ENCODE measurements at regions of chr19 and their contacts with region 1.

Region 1: GRCh38 chr19:16185123-16185767 is at the start of gene FAM32A:
- DNase-seq: peak; percentile 97 to 99
- ATAC-seq: peak; percentile 92 to 97 (median 94)
- H3K4me3 ChIP-seq: peak within 1 kb of the TSS; percentile 89
- H3K4me3 Mint-ChIP-seq: peak within 1 kb of the TSS; percentile 100
- H3K27ac ChIP-seq: peak within 1 kb of the TSS; percentile 77
- H3K27ac Mint-ChIP-seq: peak within 1 kb of the TSS; percentile 96 to 99
- H3K4me1 ChIP-seq: peaks cover 41% of the 10 kb centered on the region
- H3K4me1 Mint-ChIP-seq: peaks cover 25 to 33% of the 10 kb centered on the region in 2 donors
- H3K27me3 ChIP-seq: no peaks in the 10 kb centered on the region
- H3K27me3 Mint-ChIP-seq: no peaks in the 10 kb centered on the region
- CTCF ChIP-seq: no peak
- total RNA-seq, gene FAM32A: 46.3 to 69.3 (median 63.3) TPM

Region 2: GRCh38 chr19:15629003-15629880 is 556.0 kb before region 1 on chr19:
- intact Hi-C with region 1: loop called (anchors 1 kb)
- DNase-seq: peak; percentile 84 to 90
- ATAC-seq: peak; percentile 89 to 96 (median 95)
- H3K4me3 ChIP-seq: no peak overlapping the region
- H3K4me3 Mint-ChIP-seq: no peak overlapping the region
- H3K27ac ChIP-seq: no peak overlapping the region
- H3K27ac Mint-ChIP-seq: no peak overlapping the region
- H3K4me1 ChIP-seq: peaks cover 7% of the 10 kb centered on the region
- H3K4me1 Mint-ChIP-seq: peaks cover 6 to 8% of the 10 kb centered on the region in 2 donors
- H3K27me3 ChIP-seq: no peaks in the 10 kb centered on the region
- H3K27me3 Mint-ChIP-seq: peaks cover 6 to 8% of the 10 kb centered on the region in 2 donors
- CTCF ChIP-seq: peak; percentile 79

Region 3: DNA sequence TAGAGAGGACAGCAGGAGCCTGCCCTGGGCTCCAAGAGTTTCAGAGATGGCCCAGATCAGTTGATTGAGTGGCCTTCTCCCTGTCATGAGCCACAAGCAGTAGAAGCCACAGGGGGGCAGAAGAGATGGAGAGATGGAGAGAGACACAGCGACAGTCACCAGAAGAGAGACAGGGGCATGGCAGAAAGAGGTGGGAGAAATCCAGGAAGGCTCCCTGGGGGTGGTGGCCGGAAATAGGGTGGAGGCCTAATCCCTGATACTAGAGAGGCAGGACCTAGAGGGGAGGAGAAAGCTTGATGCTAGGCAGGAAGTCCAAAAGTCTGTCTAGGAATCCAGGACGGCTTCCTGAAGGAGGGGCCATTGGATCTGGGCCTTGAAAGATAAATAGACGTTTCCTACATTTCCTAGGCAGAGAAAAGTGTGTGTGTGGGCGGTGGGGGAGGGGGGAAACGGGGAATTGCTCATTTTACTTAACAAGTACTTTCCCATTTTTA is 118.6 kb before region 1 on chr19:
- intact Hi-C with region 1: loop called (anchors 1 kb)
- DNase-seq: peak in 1 of 2 donors; percentile 74
- ATAC-seq: peak in 2 of 3 donors; percentile 19 to 35
- H3K4me3 ChIP-seq: no peak overlapping the region
- H3K4me3 Mint-ChIP-seq: no peak overlapping the region
- H3K27ac ChIP-seq: no peak overlapping the region
- H3K27ac Mint-ChIP-seq: peak overlapping the region in 1 of 2 donors; percentile 5
- H3K4me1 ChIP-seq: peaks cover 37% of the 10 kb centered on the region
- H3K4me1 Mint-ChIP-seq: peaks cover 12 to 22% of the 10 kb centered on the region in 2 donors
- H3K27me3 ChIP-seq: no peaks in the 10 kb centered on the region
- H3K27me3 Mint-ChIP-seq: no peaks in the 10 kb centered on the region
- CTCF ChIP-seq: peak; percentile 34

Region 4: DNA sequence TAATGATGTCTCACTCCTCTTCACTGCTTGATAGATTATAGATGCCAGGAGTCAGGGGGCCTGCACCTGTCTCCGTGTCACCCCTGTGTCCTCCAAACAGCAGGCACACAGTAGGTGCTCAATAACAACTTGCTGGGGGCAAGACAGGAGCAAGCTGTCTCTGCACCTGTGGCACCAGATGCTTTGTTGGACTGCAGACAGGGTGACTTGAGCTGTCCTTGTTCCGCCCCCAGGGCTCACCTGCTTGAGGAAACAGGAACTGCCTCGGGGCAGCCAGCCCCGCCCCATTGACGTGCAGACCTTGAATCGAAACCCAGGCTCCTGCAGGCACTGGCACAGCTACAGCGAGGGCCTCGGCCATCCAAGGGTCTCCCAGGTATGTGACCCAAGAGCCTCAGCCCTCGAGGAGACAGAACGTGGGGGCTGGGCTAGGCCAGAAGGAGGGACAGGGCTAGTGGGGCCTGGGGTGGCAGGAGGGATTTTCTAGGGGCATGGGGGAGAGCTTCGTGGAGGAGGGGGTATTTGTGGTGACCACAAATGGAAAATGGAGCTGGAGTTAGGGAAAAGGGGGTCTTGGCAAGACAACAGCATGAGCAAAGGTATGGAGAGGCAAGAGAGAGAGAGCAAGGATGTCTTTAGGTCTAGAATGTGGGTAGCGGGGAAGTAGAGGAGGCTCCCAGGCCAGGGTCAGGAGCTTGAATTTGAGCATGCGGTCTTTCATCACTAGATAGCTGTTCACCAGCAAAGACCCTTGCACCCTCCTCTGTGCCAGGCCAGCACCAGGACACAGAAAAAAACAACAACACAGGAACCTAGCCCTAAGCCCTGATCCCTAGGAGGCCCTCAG is 41.6 kb before region 1 on chr19 and contains the start of gene HSH2D:
- intact Hi-C with region 1: loop called (anchors 5 kb)
- DNase-seq: peak; percentile 73 to 89
- ATAC-seq: peak; percentile 68 to 84 (median 69)
- H3K4me3 ChIP-seq: peak within 1 kb of the TSS; percentile 71
- H3K4me3 Mint-ChIP-seq: peak within 1 kb of the TSS; percentile 99
- H3K27ac ChIP-seq: peak within 1 kb of the TSS; percentile 82
- H3K27ac Mint-ChIP-seq: peak within 1 kb of the TSS; percentile 99
- H3K4me1 ChIP-seq: peaks cover 99% of the 10 kb centered on the region
- H3K4me1 Mint-ChIP-seq: peaks cover 62 to 64% of the 10 kb centered on the region in 2 donors
- H3K27me3 ChIP-seq: no peaks in the 10 kb centered on the region
- H3K27me3 Mint-ChIP-seq: no peaks in the 10 kb centered on the region
- CTCF ChIP-seq: no peak
- total RNA-seq, gene HSH2D: 203 to 319 (median 278) TPM